ENCODE measurements at regions of chr22 and their contacts with region 1.

Region 1: DNA sequence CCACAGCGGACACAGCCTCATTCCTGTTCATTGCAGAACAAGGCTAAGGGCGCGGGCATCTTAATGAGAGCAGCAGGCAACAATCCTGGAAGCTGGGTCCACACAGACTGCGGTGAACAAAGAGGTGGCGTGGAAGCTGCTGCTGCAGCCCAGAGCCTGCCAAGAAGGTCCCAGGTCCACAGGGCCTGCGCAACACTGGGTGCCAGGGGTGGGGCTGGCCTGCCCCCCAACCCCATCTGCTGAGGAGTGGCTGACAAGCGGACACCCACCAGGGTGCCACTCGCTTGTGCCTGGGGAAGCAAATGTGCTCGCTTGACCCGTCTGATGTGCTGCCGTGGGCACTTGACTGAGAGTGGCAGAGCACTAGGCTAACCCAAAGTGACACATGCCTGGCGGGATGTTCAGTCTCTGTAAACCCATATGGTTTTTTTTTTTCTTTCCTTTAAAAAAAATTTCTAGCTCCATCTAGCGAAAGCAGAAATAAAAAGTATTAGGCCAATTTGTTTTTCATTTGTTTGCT is 83.2 kb upstream of the PITPNB start:
- DNase-seq: no peak
- H3K4me3 ChIP-seq: no peak overlapping the region
- H3K27ac ChIP-seq: no peak overlapping the region
- H3K4me1 ChIP-seq: no peaks in the 10 kb centered on the region
- H3K27me3 ChIP-seq: no peaks in the 10 kb centered on the region
- CTCF ChIP-seq: no peak
- POLR2A ChIP-seq: no peak

Region 2: GRCh38 chr22:27952091-27952490 is 50.1 kb before region 1 on chr22:
- intact Hi-C with region 1: loop called (anchors 2 kb)
- DNase-seq: no peak
- H3K4me3 ChIP-seq: no peak overlapping the region
- H3K27ac ChIP-seq: no peak overlapping the region
- H3K4me1 ChIP-seq: no peaks in the 10 kb centered on the region
- H3K27me3 ChIP-seq: no peaks in the 10 kb centered on the region
- CTCF ChIP-seq: no peak
- POLR2A ChIP-seq: no peak

Measured in uterus (tissue), 4 donors.